Activated CD4-positive, alpha-beta memory T cell treated with anti-CD3 and anti-CD28 coated beads for 36 hours (primary cell): ENCODE measurements at regions of chr19 and their contacts with region 1.

Region 1: GRCh38 chr19:42423462-42424344 is 3.5 kb downstream of the LIPE start:
- DNase-seq: peak; percentile 97
- H3K4me3 Mint-ChIP-seq: peak overlapping the region; percentile 92
- H3K27ac Mint-ChIP-seq: peak overlapping the region; percentile 87
- H3K4me1 Mint-ChIP-seq: peaks cover 37% of the 10 kb centered on the region
- H3K27me3 Mint-ChIP-seq: no peaks in the 10 kb centered on the region

Region 2: DNA sequence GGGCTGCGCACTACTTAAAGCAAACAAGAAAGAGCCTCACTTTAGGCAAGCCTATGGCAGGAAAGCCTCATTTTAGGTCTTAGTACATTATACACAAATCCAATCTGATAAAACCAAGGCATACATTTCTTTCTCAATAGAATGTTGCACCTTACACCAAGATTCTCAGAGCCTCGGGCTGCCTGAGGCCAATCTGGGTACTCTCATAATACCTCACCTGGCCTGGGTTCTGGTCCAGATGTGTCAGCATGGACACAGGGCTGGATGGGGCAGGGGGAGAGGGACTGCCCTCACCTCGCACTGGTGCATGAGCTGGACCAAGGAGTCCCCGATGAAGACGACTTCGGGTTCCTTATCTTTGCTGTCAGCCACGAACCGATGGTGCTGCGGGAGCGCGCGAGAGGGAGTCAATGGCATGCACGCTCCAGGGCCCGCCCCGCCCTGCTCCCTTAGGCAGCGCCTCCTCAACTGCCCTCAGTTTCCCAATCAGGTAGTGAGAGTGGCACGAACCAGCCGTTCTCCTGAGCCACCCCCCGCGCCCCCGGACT is 122.0 kb before region 1 on chr19 and contains the start of gene PRR19:
- CTCF ChIA-PET with region 1: no interaction called
- POLR2A ChIA-PET with region 1: no interaction called
- intact Hi-C with region 1: loop called (anchors 5 kb)
- DNase-seq: peak; percentile 41
- H3K4me3 Mint-ChIP-seq: peak within 1 kb of the TSS; percentile 86
- H3K27ac Mint-ChIP-seq: peak within 1 kb of the TSS; percentile 85
- H3K4me1 Mint-ChIP-seq: peaks cover 25% of the 10 kb centered on the region
- H3K27me3 Mint-ChIP-seq: no peaks in the 10 kb centered on the region
- total RNA-seq, gene PRR19: 0.61 to 0.81 TPM

Region 3: GRCh38 chr19:42396381-42397262 is 27.1 kb before region 1 on chr19:
- CTCF ChIA-PET with region 1: interaction called, 17 read pairs
- POLR2A ChIA-PET with region 1: interaction called, 6 read pairs
- intact Hi-C with region 1: loop called (anchors 1 kb)
- DNase-seq: peak; percentile 99
- H3K4me3 Mint-ChIP-seq: peak overlapping the region; percentile 83
- H3K27ac Mint-ChIP-seq: peak overlapping the region; percentile 87
- H3K4me1 Mint-ChIP-seq: peaks cover 35% of the 10 kb centered on the region
- H3K27me3 Mint-ChIP-seq: no peaks in the 10 kb centered on the region

Region 4: GRCh38 chr19:42401365-42402303 is 22.1 kb before region 1 on chr19:
- CTCF ChIA-PET with region 1: interaction called, 17 read pairs
- POLR2A ChIA-PET with region 1: interaction called, 6 read pairs
- intact Hi-C with region 1: loop called (anchors 1 kb)
- DNase-seq: peak; percentile 78
- H3K4me3 Mint-ChIP-seq: peak overlapping the region; percentile 71
- H3K27ac Mint-ChIP-seq: peak overlapping the region; percentile 45
- H3K4me1 Mint-ChIP-seq: peaks cover 35% of the 10 kb centered on the region
- H3K27me3 Mint-ChIP-seq: no peaks in the 10 kb centered on the region

Region 5: DNA sequence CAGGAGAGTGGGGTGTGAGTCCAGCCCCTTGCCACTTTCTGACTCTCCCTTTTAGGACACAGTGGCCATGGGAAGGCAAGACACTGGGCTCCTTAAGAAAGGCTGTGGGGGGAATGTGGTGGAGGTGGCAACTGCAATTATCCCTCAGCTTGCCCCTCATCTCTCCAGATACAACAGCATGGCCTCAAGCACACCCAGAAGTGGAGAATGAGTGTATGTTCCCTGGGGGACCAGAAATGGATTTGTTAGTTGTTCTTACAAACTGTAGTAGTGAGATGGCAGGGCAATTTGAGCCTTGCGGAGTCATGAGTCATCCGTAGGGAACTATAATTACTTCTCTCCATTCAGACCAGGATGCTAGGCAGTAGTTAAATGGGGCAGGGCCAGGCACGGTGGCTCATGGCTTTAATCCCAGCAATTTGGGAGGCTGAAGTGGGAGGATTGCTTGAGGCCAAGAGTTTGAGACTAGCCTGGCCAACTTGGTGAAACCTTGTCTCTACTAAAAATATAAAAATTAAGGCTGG is 44.6 kb after region 1 on chr19:
- CTCF ChIA-PET with region 1: no interaction called
- POLR2A ChIA-PET with region 1: no interaction called
- intact Hi-C with region 1: no loop called
- DNase-seq: no peak
- H3K4me3 Mint-ChIP-seq: no peak overlapping the region
- H3K27ac Mint-ChIP-seq: no peak overlapping the region
- H3K4me1 Mint-ChIP-seq: peaks cover 14% of the 10 kb centered on the region
- H3K27me3 Mint-ChIP-seq: peaks cover 1% of the 10 kb centered on the region